ENCODE measurements at regions of chr5 and their contacts with region 1.

Region 1: DNA sequence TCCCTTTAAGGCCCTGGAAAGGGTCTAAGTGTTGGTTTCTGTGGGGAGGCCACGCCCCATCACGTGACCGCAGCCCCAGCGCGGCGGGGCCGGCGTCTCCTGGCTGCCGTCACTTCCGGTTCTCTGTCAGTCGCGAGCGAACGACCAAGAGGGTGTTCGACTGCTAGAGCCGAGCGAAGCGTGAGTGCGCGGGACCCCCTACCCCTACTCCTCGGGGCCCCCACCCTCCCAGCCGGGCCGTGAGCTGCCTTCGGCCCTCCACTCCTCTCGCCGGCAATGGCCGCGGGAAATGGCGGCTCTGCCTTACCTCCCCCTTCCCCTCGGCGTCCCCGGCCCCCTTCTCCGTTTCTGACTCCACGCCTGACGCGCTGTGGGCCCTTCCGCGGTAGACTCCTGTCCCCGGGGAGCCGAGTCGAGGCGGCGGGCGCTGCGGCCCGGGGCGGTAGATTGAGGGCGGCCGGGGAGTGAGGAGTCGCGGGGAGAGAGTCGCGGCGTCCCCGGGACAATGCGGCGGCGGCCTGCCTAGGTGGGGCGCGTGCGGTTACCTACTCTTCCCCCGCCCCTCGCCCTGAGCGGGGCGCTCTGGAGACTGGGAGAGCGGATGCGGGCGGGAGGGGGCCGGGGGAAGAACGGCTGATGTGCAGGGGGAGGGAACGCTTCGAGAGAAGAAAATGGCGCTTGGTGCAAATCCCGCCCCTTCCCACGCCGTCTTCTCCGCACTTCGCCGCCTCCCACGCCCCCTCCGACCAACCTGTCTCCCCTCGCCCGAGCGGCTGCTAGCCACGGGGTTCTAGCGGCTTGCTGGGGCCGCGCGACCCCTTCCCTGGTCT is at the start of gene SUB1:
- DNase-seq: peak; percentile 75 to 93
- H3K4me3 ChIP-seq: peak within 1 kb of the TSS; percentile 68 to 96 (median 88)
- H3K27ac ChIP-seq: peak within 1 kb of the TSS; percentile 81
- H3K4me1 ChIP-seq: peaks cover 3 to 16% (median 9%) of the 10 kb centered on the region in 4 experiments
- H3K27me3 ChIP-seq: no peaks in the 10 kb centered on the region
- CTCF ChIP-seq: peak in 1 of 3 experiments; percentile 4; a peak in 1 of 4 replicates
- EP300 ChIP-seq: no peak
- POLR2A ChIP-seq: peak; percentile 42 to 91
- RAD21 ChIP-seq: no peak
- total RNA-seq, gene SUB1: 319 and 325 TPM in 2 replicates

Region 2: DNA sequence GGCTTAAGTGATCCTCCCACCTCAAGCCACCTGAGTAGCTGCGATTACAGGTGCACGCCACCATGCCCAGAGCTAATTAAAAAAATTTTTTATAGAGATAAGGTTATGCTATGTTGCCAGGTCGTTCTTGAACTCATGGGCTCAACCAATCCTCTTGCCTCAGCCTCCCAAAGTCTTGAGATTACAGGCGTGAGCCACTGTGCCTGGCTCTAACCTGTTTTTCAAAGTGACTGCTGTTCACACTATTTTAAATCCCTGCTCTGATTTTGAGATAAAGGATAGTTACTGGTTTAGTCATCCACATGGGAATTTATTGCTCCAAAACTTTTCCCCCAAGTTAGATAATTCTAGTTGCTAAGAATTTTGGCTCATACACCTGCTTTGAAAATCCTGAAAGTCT is 224.8 kb before region 1 on chr5:
- CTCF ChIA-PET with region 1: no interaction called
- POLR2A ChIA-PET with region 1: no interaction called
- DNase-seq: no peak
- H3K4me3 ChIP-seq: no peak overlapping the region
- H3K27ac ChIP-seq: 0 out of 2 replicates have a peak overlapping the region, but pooled peaks have one; percentile 12
- H3K4me1 ChIP-seq: peaks cover 0 to 2% (median 0%) of the 10 kb centered on the region in 4 experiments; a peak in 1 of 7 replicates
- H3K27me3 ChIP-seq: no peaks in the 10 kb centered on the region
- CTCF ChIP-seq: no peak
- EP300 ChIP-seq: no peak
- POLR2A ChIP-seq: no peak
- RAD21 ChIP-seq: no peak

Region 3: GRCh38 chr5:32450952-32451351 is 134.7 kb before region 1 on chr5:
- CTCF ChIA-PET with region 1: interaction called, 20 read pairs
- POLR2A ChIA-PET with region 1: no interaction called
- DNase-seq: peak in 1 of 2 experiments; percentile 36
- H3K4me3 ChIP-seq: no peak overlapping the region
- H3K27ac ChIP-seq: no peak overlapping the region
- H3K4me1 ChIP-seq: no peaks in the 10 kb centered on the region
- H3K27me3 ChIP-seq: no peaks in the 10 kb centered on the region; a peak in 2 of 7 replicates
- CTCF ChIP-seq: peak in 2 of 3 experiments; percentile 24 to 63; a peak in 2 of 4 replicates
- EP300 ChIP-seq: no peak
- POLR2A ChIP-seq: no peak
- RAD21 ChIP-seq: peak; percentile 49 to 62

Region 4: DNA sequence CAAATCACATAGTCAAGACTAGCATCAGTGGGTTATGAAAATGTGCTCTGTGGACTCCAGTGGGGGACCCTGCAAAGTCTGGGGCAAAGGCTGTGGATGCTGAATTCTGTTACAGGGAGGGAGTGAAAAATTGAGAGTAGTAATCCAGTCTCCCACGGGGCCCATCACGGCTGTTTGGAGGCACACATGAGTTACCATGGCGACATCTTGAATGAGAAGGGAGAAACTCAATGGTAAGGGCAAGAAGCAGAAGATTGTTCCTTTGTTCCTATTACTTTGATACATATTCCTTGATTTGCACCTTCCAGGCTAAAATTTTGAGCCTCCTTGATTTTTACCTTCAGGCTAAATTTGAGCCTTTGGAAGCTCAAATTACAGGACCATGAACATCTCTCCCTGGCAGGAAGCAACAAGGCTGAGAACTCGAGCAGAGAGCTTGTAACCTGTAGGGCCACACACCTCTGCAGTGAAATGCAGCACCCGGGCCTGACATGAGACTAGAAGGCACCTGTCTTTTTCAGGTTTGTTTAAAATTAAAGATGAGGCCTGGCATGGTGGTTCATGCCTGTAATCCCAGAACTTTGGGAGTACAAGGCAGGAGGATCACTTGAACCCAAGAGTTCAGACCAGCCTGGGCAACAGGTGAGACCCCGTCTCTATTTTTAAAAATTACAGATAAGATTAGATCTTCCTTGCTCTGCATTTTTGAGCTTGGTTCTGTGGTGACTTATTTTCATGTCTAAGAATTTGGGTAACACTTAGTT is 110.1 kb before region 1 on chr5:
- CTCF ChIA-PET with region 1: interaction called, 11 read pairs
- POLR2A ChIA-PET with region 1: no interaction called
- DNase-seq: no peak
- H3K4me3 ChIP-seq: no peak overlapping the region
- H3K27ac ChIP-seq: peak overlapping the region; percentile 12; the same call in 1 of the 2 replicates
- H3K4me1 ChIP-seq: peaks cover 2 to 11% (median 9%) of the 10 kb centered on the region in 4 experiments; a peak in 6 of 7 replicates
- H3K27me3 ChIP-seq: no peaks in the 10 kb centered on the region
- CTCF ChIP-seq: no peak
- EP300 ChIP-seq: no peak
- POLR2A ChIP-seq: no peak
- RAD21 ChIP-seq: no peak

Region 5: DNA sequence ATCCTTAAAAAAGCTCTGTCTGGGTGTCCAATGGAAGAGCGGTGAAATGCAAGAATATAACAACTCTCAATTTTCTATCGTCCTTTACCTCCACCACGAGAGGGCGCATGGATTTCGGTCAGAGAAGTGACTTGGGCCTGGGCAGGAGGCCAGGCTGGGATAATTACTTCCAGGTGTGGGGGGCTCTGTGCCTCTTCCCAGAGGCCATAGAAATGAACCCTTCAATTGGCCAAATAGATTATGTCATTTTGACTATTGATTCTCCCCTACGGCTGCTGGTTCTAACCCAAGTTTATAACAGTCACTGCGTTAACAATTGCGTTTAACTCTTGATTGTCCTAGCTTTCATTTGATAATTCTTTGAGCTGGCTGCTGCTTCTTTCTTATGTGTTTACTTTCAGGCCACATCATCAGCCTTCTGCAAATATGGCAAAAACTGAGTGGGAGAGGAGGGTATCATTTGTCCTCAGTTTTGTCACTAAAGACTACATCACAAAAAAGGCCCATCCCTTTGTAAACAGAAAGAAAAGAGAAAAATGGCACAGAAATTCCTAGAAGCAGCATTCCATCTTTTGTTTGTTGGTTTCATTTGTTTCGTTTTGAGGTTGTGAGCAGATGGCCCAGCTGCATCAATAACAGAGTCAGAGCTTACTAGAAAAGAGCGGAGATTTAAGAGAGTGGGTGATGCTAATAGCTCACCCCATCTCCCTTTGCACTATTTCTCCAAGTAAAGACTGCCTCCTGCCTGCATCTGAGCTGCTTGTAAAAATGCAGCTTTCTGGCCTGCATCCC is 95.7 kb before region 1 on chr5:
- CTCF ChIA-PET with region 1: interaction called, 158 read pairs
- POLR2A ChIA-PET with region 1: interaction called, 11 read pairs
- DNase-seq: peak; percentile 23 to 85
- H3K4me3 ChIP-seq: no peak overlapping the region
- H3K27ac ChIP-seq: no peak overlapping the region
- H3K4me1 ChIP-seq: no peaks in the 10 kb centered on the region
- H3K27me3 ChIP-seq: no peaks in the 10 kb centered on the region
- CTCF ChIP-seq: peak; percentile 53 to 76 (median 75)
- EP300 ChIP-seq: no peak
- POLR2A ChIP-seq: no peak
- RAD21 ChIP-seq: peak; percentile 80 to 85

Region 6: DNA sequence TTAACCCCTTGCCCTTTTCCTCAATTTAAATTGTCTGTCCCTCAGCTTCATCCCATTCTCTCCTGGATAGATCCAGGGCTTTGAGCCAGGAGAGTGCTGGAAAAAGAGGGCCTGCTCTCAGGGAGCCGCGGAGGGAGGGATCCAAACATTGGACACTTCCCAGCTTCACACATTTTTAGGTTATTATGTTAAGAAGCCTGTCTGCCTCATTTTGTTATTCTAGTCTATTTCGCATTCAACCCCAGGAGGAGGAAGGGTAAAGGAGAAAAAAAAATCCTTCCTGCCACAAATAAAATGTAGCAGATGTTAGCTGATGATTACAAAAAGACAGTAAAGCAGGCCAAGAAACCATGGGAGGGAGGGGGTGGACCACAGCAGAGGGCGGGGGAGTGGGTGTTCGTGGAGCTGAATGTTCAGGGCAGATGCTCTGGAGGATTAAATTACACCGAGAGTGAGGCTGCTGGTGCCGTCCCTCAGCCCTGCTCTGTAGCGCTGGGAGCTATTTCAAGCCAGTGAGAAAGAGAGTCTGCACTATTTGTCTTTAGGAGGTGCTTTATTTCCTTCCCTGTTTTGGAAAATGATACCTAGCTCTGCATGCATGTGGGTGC is 80.6 kb before region 1 on chr5:
- CTCF ChIA-PET with region 1: interaction called, 15 read pairs
- POLR2A ChIA-PET with region 1: interaction called, 6 read pairs
- DNase-seq: no peak
- H3K4me3 ChIP-seq: no peak overlapping the region
- H3K27ac ChIP-seq: no peak overlapping the region
- H3K4me1 ChIP-seq: peaks cover 11 to 30% (median 16%) of the 10 kb centered on the region in 4 experiments
- H3K27me3 ChIP-seq: peaks cover 0 to 23% (median 15%) of the 10 kb centered on the region in 4 experiments; a peak in 4 of 7 replicates
- CTCF ChIP-seq: no peak
- EP300 ChIP-seq: no peak
- POLR2A ChIP-seq: no peak
- RAD21 ChIP-seq: no peak

Region 7: GRCh38 chr5:32613050-32613672 is 27.5 kb after region 1 on chr5:
- CTCF ChIA-PET with region 1: interaction called, 22 read pairs
- POLR2A ChIA-PET with region 1: interaction called, 3 read pairs
- DNase-seq: peak; percentile 25 to 94
- H3K4me3 ChIP-seq: no peak overlapping the region
- H3K27ac ChIP-seq: no peak overlapping the region
- H3K4me1 ChIP-seq: no peaks in the 10 kb centered on the region
- H3K27me3 ChIP-seq: no peaks in the 10 kb centered on the region
- CTCF ChIP-seq: peak; percentile 72 to 89 (median 88)
- EP300 ChIP-seq: no peak
- POLR2A ChIP-seq: no peak
- RAD21 ChIP-seq: peak; percentile 93 to 97